Gastrocnemius medialis (tissue), 4 donors: ENCODE measurements at regions of chr12 and their contacts with region 1.

Region 1: GRCh38 chr12:55926738-55927587 is 731 bp downstream of the PYM1 start:
- DNase-seq: peak; percentile 72 to 84
- ATAC-seq: peak; percentile 93 to 95
- H3K4me3 ChIP-seq: peak overlapping the region; percentile 92 to 100 (median 94)
- H3K27ac ChIP-seq: peak overlapping the region; percentile 94 to 98 (median 98)
- H3K4me1 ChIP-seq: peaks cover 25 to 29% of the 10 kb centered on the region in 2 donors
- H3K27me3 ChIP-seq: peaks cover 0 to under 1% (median 0%) of the 10 kb centered on the region in 3 donors
- CTCF ChIP-seq: peak; percentile 56 to 82 (median 73)
- POLR2A ChIP-seq: peak in 1 of 2 donors; percentile 45

Region 2: DNA sequence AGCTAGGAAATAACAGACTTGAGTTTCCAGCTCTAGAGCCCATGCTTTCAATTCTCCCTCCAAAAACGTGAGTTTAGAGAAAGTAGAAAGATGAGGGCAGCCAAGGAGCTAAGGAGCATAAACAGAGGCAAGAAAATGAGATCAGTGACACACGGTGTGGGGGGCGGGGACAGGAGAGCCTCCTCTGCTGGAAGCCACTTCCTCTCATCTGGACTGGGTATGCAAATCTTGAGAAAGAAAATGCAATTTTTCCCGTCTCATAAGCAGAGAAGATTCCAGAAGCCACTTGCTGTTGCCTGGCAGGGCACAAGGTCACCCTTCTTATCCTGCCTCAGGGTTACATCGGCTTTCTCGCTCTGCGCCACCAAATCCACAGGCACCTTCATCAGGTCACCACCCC is 284.3 kb before region 1 on chr12:
- in situ Hi-C with region 1: loop called in 1 of 4 experiments (anchors 25 kb)
- intact Hi-C with region 1: no loop called
- DNase-seq: no peak
- ATAC-seq: no peak
- H3K4me3 ChIP-seq: no peak overlapping the region
- H3K27ac ChIP-seq: no peak overlapping the region
- H3K4me1 ChIP-seq: peaks cover 0 to 4% of the 10 kb centered on the region in 2 donors
- H3K27me3 ChIP-seq: peaks cover 0 to 2% (median 0%) of the 10 kb centered on the region in 3 donors
- CTCF ChIP-seq: no peak
- POLR2A ChIP-seq: no peak

Region 3: DNA sequence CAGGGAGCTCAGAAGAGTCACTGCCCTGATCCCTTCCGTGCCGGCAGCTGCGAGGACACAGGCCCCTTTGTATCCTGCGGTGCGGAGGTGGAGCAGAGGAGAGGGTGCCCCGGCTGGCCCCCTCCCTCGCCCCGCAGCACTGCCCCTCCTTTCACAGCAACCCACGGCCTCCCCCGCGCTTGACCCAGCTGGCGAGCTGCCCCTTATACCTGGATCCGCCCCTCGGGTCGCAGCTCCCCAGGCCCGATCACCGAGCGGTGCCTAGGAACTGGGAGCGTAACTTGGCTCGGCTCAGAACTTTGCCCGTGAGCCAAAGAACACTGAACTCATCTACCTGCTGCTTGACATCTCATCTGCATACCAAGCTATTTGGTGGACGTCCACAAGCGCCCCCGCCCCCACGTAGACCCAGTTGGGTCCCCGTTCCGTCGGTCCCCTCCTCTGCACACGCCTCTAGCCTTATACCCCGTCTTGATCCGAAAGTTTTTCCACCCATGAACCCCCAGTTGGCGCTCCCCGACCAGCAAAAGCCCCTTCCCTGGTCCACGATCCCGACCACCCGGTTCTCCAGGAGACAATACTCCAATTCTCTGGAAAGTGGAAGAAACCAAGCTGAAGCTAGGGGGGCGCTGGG is 96.9 kb before region 1 on chr12:
- in situ Hi-C with region 1: no loop called
- intact Hi-C with region 1: loop called (anchors 1 kb)
- DNase-seq: no peak
- ATAC-seq: peak in 1 of 2 donors; percentile 8
- H3K4me3 ChIP-seq: peak overlapping the region; percentile 85 to 97 (median 96)
- H3K27ac ChIP-seq: peak overlapping the region; percentile 82 to 89 (median 88)
- H3K4me1 ChIP-seq: peaks cover 33 to 39% of the 10 kb centered on the region in 2 donors
- H3K27me3 ChIP-seq: no peaks in the 10 kb centered on the region
- CTCF ChIP-seq: no peak
- POLR2A ChIP-seq: no peak

Region 4: DNA sequence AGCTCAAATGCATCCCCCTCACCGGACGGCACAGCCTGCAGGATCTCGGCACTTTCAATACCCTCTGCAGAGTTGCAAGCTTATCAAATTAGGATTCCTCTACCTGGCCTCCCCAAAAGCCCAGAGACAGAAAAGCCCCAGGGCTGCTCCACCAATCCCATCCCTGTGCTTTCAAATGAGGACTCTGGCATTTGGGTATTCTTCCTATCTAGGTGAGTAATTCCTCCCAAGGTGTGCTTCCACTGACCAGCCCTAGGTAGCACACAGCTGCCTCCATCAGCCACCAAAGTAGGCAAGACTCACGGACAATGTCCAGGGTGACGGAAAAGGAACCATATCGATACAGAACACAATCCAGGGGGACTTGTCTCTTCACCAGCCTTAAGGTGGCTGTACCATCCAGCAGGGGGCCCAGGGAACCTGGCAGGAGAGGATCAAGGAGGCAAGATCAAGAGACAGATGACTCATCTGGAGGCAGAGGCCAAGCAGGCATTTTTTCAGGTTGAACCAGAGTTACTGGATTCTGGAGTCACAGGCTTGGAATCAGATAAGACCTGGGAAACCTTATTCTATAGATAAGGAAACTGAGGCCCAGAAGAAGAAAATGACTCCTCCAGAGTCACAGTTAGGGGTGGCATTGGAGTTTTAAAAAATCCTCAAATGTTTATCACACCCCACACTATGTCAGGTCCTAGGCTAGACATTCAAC is 29.0 kb after region 1 on chr12:
- in situ Hi-C with region 1: no loop called
- intact Hi-C with region 1: no loop called
- DNase-seq: no peak
- ATAC-seq: no peak
- H3K4me3 ChIP-seq: no peak overlapping the region
- H3K27ac ChIP-seq: no peak overlapping the region
- H3K4me1 ChIP-seq: no peaks in the 10 kb centered on the region
- H3K27me3 ChIP-seq: no peaks in the 10 kb centered on the region
- CTCF ChIP-seq: no peak
- POLR2A ChIP-seq: no peak

Region 5: DNA sequence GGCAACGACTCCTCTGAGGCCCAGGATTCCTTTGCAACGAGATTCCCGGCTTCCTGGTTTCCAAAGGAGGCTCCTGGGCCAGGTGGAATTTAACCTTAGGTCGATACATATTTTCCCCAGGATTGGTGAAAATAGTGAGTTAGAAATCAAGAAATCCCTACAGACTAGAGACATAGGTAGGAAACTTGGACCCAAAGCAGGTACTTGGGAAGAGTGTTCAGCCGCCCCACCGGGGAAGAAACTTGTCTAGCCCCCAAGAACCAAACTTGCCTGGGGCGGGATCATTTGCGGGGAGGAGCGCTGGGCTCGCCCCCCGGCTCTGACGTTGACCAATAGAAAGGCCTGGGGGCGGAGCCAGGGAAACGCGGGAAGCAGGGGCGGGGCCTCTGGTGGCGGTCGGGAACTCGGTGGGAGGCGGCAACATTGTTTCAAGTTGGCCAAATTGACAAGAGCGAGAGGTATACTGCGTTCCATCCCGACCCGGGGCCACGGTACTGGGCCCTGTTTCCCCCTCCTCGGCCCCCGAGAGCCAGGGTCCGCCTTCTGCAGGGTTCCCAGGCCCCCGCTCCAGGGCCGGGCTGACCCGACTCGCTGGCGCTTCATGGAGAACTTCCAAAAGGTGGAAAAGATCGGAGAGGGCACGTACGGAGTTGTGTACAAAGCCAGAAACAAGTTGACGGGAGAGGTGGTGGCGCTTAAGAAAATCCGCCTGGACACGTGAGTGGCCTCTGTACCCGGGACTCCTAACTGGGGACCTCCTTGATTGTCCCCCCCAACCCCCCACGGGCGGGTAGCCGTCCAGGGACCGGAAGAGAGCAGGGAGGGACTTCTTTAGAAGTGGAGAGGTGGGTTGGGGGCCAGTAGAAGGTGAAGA is 39.7 kb after region 1 on chr12 and contains the start of gene CDK2:
- in situ Hi-C with region 1: no loop called
- intact Hi-C with region 1: loop called (anchors 1 kb)
- DNase-seq: peak; percentile 81 to 88
- ATAC-seq: peak; percentile 94 to 95
- H3K4me3 ChIP-seq: peak within 1 kb of the TSS; percentile 73 to 90 (median 81)
- H3K27ac ChIP-seq: peak within 1 kb of the TSS; percentile 78 to 85 (median 80)
- H3K4me1 ChIP-seq: peaks cover 14 to 15% of the 10 kb centered on the region in 2 donors
- H3K27me3 ChIP-seq: peaks cover 0 to 3% (median 0%) of the 10 kb centered on the region in 3 donors
- CTCF ChIP-seq: no peak
- POLR2A ChIP-seq: peak; percentile 69 to 80
- total RNA-seq, gene CDK2: 6.4 to 11.7 (median 8.1) TPM

Region 6: DNA sequence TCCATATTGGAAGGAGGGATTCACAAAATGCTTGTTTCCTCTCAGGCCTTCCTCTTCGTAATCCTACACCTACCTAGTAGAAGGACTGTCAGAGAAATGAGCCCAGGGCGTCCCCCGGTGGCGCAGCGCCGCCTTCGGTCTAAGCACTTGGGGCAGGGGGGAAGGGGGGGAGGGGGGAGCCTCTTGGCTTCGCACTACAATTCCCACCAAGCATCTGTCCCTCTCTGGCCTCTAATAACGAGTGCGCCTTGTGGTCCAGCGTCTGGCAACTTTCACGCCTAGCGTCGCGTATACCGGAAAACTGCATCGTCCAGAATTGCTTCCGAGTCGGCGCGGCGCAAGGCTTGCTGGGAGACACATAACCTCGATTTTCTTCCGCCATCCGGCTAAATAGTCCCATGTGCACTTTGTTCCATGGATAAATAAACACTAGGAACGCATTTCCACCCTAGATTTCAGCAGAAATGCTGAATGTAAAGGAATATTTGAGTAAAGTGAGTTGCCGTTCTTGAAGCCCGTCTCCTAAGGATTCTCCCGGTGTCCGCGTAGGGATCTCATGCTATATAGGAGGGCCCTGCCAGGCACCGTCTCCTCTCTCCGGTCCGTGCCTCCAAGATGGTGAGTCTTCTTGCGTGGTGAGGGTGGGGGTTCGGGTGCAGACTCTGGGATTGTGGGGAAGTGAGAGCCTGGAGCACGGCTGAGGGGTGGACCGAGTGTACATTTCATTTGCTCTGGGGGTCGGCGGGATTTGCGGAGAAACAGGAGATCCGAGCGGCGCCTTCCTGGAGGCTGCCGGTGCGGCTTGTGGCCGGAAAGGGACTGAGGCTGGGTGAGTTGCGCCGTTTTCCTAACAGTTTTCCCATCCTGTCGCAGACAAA is 114.8 kb after region 1 on chr12 and contains the start of gene RPS26:
- in situ Hi-C with region 1: no loop called
- intact Hi-C with region 1: loop called (anchors 1 kb)
- DNase-seq: peak; percentile 96 to 97
- ATAC-seq: peak; percentile 98 to 99
- H3K4me3 ChIP-seq: peak within 1 kb of the TSS; percentile 66 to 94 (median 86)
- H3K27ac ChIP-seq: peak within 1 kb of the TSS; percentile 87 to 98 (median 94)
- H3K4me1 ChIP-seq: peaks cover 15 to 19% of the 10 kb centered on the region in 2 donors
- H3K27me3 ChIP-seq: no peaks in the 10 kb centered on the region
- CTCF ChIP-seq: peak; percentile 11 to 70 (median 40)
- POLR2A ChIP-seq: peak; percentile 86 to 90
- total RNA-seq, gene RPS26: 618 to 1,648 (median 1,209) TPM